ENCODE measurements at regions of chr17 and their contacts with region 1.

Region 1: GRCh38 chr17:2140683-2141082 is 85.8 kb downstream of the HIC1 start:
- DNase-seq: no peak
- H3K27ac ChIP-seq: no peak overlapping the region
- CTCF ChIP-seq: no peak

Region 2: DNA sequence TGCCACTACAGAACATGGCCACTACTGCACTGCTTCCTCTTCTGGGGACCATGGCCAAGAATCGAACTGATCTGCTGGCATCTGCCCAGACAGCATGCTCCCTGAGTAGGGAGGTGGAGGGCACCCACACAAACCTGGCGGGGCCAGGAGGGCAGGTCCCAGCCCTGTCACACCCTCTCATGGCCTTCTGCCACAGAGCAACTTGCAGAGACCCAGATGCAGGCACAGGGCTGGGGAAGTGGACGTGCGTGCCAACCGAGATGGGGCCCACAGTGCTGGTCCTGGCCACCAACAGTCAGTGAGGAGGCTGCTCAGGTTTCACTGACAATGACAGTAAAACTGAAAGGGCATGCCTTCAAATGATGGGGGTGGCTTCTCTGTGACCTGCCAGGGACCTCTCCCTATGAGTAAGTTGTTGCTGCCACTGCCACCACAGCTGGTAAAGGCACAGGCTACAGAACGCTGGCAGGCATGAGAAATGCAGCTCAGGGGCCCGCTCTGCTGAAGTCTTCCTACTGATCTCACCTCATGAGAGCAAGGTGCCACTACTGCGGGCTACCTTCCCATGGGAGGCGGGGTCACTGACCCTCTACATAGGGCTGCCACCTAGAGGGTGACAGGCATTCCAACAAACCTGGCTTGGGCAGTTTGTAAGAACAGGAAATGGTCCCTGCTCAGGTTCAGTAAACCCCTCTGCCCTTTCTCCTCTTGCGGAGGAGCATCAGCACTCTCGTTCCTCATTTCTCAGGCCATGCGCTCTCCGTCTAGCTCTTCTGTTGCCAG is 70.3 kb before region 1 on chr17:
- CTCF ChIA-PET with region 1: interaction called, 10 read pairs
- POLR2A ChIA-PET with region 1: no interaction called
- DNase-seq: no peak
- H3K27ac ChIP-seq: peak overlapping the region; percentile 26
- CTCF ChIP-seq: no peak